Right ventricle myocardium superior (tissue), 1 donor: ENCODE measurements at regions of chr15 and their contacts with region 1.

Region 1: DNA sequence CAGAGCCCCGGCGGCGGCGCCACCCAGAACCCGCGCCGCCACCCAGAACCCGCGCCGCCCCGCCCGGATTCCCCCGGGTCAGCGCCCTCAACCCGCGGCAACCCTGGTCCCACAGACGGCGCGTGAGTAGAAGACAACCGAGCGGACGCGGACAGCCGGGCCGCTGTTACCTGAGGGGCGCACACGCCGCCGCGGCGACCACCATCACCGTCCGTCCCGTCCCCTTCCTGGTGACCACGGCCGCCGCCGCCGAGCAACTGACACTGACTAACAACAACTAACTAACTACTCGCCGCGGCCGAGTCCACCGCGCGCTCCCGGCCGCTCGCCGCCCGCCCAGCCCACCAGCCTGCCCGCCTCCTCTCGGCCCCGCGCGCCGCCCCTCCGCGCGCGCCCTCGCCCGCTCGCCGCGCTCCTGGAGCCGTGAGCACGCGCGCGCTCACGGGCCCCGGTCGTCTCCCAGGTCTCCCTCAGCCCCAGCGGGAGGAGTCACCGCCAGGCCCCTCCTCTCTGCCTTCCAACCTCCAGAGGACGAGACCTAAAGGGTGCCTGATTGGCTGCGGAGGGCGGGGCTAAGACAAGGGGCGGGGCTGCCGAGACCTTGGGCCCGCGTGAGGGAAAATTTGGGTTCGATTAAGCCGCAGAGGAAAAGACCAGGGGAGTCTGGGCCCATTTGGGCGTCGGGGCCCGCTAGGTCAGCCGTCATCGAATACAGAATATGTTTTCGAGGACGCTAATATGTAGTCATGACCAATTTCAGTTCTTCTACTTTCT is at the start of gene PEAK1:
- DNase-seq: peak; percentile 100
- ATAC-seq: peak; percentile 97
- total RNA-seq, gene PEAK1: 59.9 TPM

Region 2: DNA sequence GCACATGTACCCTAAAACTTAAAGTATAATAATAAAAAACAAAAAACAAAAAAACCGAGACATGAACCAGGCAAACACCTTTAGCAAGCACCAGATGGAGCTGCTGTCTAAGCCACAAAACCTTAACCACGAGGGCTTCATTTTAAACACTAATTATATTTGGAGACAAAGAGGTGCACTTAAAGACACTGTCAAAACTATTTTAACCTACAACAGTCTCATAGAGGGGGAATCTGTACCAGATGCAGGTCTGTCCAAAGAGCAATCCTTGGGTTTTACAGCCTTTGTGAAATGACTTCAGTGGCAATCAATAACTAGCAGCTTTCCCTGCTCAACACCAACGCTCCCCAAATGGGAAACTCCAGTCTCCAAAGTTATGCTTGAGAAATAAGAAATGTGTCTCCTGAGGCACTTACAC is 233.4 kb before region 1 on chr15:
- intact Hi-C with region 1: loop called (anchors 10 kb)
- DNase-seq: no peak
- ATAC-seq: peak; percentile 68

Region 3: GRCh38 chr15:77475898-77476297 is 55.9 kb after region 1 on chr15:
- intact Hi-C with region 1: no loop called
- DNase-seq: no peak
- ATAC-seq: no peak

Region 4: DNA sequence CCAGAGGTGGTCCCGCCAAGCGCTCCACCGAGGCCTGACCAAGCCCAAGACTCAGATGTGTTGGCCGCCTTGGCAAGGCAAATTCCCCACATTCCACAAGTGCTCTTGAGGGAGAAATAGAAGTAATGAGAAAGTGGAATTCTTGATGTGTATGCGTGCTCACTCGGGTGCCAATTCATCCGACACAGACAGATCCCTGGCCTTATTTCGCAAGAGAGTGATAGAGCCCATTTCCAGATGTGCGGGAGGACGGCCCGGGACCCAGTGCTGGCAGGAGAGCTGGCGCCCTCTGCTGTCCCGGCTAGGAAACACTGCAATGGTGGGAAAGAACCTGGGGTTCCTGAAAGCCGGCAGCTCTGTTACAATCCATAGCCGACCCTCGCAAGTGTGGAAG is 76.7 kb after region 1 on chr15:
- intact Hi-C with region 1: loop called (anchors 5 kb)
- DNase-seq: peak; percentile 95
- ATAC-seq: peak; percentile 86